Activated CD4-positive, alpha-beta T cell treated with anti-CD3 and anti-CD28 coated beads for 36 hours (primary cell): ENCODE measurements at regions of chr3 and their contacts with region 1.

Region 1: GRCh38 chr3:100400780-100401673 is at the starts of genes LNP1 and TOMM70:
- DNase-seq: peak; percentile 98
- ATAC-seq: peak; percentile 91
- H3K4me3 Mint-ChIP-seq: peak within 1 kb of the TSS; percentile 78
- H3K27ac Mint-ChIP-seq: peak within 1 kb of the TSS; percentile 96
- H3K4me1 Mint-ChIP-seq: peaks cover 51% of the 10 kb centered on the region
- H3K27me3 Mint-ChIP-seq: no peaks in the 10 kb centered on the region
- total RNA-seq, gene LNP1: 1.7 TPM
- total RNA-seq, gene TOMM70: 54.0 to 54.1 TPM

Region 2: GRCh38 chr3:99817437-99818240 is 583.4 kb before region 1 on chr3 and contains the start of gene CMSS1:
- CTCF ChIA-PET with region 1: no interaction called
- POLR2A ChIA-PET with region 1: no interaction called
- intact Hi-C with region 1: loop called (anchors 2 kb)
- DNase-seq: peak; percentile 98
- ATAC-seq: peak; percentile 92
- H3K4me3 Mint-ChIP-seq: peak within 1 kb of the TSS; percentile 85
- H3K27ac Mint-ChIP-seq: peak within 1 kb of the TSS; percentile 97
- H3K4me1 Mint-ChIP-seq: peaks cover 42% of the 10 kb centered on the region
- H3K27me3 Mint-ChIP-seq: no peaks in the 10 kb centered on the region
- total RNA-seq, gene CMSS1: 94.0 to 96.3 TPM

Region 3: DNA sequence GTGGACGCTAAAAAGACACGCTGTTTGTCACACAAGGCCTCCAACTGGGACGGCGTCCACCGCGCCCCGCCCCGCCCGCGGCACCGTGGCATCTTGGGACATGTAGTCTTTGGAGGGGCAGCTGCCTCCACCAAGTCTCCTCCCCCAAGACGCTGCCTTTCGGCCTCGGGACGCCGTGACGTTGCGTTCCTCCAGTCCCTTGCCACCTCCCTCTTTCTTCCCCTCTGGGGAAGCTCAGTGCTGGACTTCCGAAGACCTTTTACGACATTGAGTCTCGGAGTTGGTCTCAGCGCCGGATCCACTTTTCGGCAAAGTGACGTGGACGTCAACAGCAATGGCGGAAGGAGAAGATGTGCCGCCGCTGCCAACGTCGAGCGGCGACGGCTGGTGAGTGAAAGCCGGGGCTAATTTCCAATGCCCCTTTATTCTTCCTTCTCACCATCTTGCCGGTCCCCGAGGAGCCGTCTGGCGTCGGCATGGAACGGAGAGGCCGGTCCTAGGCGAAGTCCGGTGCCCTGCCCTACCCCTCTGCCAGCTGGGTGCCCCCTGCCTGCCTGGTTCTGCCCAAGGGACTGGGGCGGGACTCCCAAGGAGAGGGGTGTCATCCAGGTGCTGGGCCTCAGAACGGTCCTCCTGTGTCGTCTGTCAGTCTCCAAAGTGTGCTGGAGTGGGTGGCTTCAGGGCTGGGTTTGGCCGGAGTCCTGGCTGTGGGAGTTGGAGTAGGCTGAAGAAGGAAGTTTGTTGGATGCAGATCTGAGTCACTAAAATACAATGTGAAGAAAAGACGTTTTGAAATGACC is 140.1 kb before region 1 on chr3 and contains the start of gene TBC1D23:
- CTCF ChIA-PET with region 1: interaction called, 7 read pairs
- POLR2A ChIA-PET with region 1: interaction called, 6 read pairs
- intact Hi-C with region 1: loop called (anchors 1 kb)
- DNase-seq: peak; percentile 98
- ATAC-seq: peak; percentile 100
- H3K4me3 Mint-ChIP-seq: peak within 1 kb of the TSS; percentile 91
- H3K27ac Mint-ChIP-seq: peak within 1 kb of the TSS; percentile 96
- H3K4me1 Mint-ChIP-seq: peaks cover 58% of the 10 kb centered on the region
- H3K27me3 Mint-ChIP-seq: no peaks in the 10 kb centered on the region
- total RNA-seq, gene TBC1D23: 17.6 to 19.4 TPM

Region 4: DNA sequence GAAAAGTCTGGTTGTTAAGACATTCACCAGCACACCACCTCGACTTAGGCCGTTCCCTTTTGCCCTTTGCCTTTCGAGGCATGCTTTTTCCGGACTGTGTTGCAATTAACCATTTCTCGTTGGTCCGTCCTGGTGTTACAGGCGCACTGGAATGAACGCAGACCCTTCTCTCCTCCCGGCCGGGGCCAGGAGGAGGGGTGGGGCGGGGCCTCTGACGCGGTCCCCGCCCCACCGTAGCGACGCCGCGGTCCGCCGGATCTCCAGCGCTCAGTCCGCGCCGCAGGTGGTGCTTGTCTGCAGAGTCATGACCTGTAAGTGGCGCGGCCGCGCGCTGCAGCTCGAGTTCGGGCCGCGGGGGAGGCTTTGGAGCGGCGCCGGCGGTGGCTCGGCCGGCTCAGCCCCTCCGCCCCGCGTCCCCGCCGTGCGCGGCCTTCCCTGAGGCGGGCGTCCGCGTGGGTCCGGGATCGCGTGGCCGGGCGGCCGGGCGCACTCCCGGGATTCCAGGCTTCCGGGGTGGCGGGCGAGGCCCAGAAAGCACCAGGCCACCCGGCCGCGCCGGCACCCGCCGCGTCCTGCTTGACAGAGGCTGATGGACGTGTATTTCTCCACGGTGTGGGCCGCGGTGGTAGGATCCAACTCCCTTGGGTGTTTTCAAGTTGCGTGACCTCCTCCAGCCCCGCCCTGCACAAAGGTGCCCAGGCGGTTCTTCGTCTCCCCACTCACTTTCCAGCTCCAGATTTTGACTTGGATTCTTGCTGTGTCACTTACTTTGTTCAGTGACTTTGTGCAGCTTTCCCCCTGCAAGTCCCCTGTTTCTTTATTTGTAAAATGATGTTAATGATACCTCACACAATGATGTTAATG is 66.3 kb before region 1 on chr3 and contains the start of gene NIT2:
- CTCF ChIA-PET with region 1: interaction called, 5 read pairs
- POLR2A ChIA-PET with region 1: no interaction called
- intact Hi-C with region 1: loop called (anchors 1 kb)
- DNase-seq: peak; percentile 90
- ATAC-seq: peak; percentile 98
- H3K4me3 Mint-ChIP-seq: peak within 1 kb of the TSS; percentile 92
- H3K27ac Mint-ChIP-seq: peak within 1 kb of the TSS; percentile 96
- H3K4me1 Mint-ChIP-seq: peaks cover 24% of the 10 kb centered on the region
- H3K27me3 Mint-ChIP-seq: no peaks in the 10 kb centered on the region
- total RNA-seq, gene NIT2: 59.1 to 70.8 TPM

Region 5: GRCh38 chr3:100449214-100449613 is 48.2 kb after region 1 on chr3:
- CTCF ChIA-PET with region 1: no interaction called
- POLR2A ChIA-PET with region 1: no interaction called
- intact Hi-C with region 1: no loop called
- DNase-seq: no peak
- ATAC-seq: no peak
- H3K4me3 Mint-ChIP-seq: no peak overlapping the region
- H3K27ac Mint-ChIP-seq: no peak overlapping the region
- H3K4me1 Mint-ChIP-seq: no peaks in the 10 kb centered on the region
- H3K27me3 Mint-ChIP-seq: no peaks in the 10 kb centered on the region

Region 6: DNA sequence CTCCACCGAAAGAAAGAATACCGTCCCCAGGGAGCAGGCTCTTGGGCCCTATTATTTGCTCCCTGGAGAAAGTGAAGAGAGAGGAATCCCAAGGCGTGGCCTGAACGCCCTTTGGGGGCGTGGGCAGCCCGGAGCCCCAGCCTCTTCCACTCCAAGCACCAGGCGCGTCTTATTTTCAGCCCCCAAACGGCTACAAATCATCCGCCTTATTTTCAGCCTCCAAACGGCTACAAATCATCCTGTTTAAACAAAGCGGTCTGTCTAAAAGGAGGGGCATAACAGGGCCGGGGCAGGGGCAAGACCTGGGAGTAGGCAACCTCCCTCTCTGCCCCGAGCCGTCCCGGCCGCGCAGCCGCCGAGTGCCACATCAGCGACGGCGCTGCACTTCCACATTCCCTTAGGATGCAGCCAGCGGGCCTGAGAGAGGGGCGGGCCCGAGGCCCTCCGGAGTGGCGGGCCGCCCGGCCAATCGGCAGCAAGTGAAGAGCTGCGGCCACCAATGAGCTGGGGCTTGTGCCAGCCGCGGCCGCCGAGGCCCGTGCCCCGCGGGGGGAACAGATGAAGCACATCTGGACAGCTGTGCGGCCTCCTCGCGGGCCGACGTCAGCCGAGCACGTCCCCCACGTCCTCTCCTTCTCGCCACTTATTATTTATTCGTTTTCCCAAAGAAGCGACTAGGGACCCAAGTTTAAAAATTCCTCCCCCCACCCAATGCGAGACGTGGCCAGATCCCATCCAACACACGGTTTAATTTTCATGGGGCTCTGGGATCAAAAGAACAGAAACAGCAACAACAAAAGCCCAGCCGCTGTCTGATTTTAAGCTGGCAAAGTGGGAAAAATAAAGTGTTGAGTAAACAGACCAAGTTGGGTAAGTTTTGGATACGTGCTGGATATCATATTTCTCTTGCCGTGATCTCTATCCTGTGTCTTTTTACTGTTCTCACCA is 91.3 kb after region 1 on chr3 and contains the start of gene TMEM45A:
- CTCF ChIA-PET with region 1: no interaction called
- POLR2A ChIA-PET with region 1: no interaction called
- intact Hi-C with region 1: loop called in 1 of 2 experiments (anchors 1 kb)
- DNase-seq: peak; percentile 91
- ATAC-seq: peak; percentile 100
- H3K4me3 Mint-ChIP-seq: peak within 1 kb of the TSS; percentile 82
- H3K27ac Mint-ChIP-seq: peak within 1 kb of the TSS; percentile 77
- H3K4me1 Mint-ChIP-seq: peaks cover 6% of the 10 kb centered on the region
- H3K27me3 Mint-ChIP-seq: peaks cover 14% of the 10 kb centered on the region
- total RNA-seq, gene TMEM45A: 2.2 to 3.1 TPM

Region 7: DNA sequence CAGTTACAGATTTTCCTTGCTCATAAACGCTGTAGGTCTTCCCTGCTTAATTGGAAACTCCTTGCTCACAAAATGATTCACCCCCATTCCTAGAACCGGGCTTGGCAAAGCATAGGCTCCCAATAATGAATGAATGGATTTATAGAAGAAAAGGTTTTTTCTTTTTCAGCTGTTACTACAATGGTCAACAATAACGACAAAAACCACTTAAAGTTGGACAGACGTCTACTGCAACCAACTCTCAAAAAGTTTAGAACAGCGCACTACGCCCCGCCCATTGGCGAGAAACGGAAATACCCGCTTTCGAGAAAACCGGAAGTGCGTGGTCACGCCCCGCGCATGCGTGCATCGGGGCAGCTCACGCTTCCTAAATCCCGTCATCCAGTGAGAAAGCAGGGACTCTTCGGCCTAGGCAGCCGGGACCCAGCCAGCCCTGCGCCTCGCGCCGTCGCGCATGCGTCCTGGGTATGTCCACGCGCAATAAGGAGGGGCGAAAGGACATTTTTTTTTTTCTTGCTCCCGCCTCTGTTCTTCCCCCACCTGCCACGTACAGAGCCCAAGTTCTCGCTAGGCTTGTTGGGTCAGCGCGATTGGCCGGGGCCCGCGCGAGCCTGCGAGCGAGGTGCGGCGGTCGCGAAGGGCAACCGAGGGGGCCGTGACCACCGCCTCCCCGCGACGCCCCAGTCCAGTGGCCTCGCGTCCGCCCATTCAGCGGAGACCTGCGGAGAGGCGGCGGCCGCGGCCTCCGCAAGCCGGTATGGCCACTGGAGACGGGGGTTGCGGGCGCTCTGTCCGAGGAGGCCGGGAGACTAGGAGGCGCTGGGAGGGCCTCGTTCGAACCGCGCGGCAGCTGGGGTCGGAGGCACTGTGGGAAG is 308.2 kb after region 1 on chr3 and contains the start of gene TFG:
- CTCF ChIA-PET with region 1: interaction called, 3 read pairs
- POLR2A ChIA-PET with region 1: interaction called, 7 read pairs
- intact Hi-C with region 1: loop called (anchors 1 kb)
- DNase-seq: peak; percentile 98
- ATAC-seq: peak; percentile 91
- H3K4me3 Mint-ChIP-seq: peak within 1 kb of the TSS; percentile 79
- H3K27ac Mint-ChIP-seq: peak within 1 kb of the TSS; percentile 98
- H3K4me1 Mint-ChIP-seq: peaks cover 45% of the 10 kb centered on the region
- H3K27me3 Mint-ChIP-seq: no peaks in the 10 kb centered on the region
- total RNA-seq, gene TFG: 61.4 to 79.8 TPM

Region 8: GRCh38 chr3:101676765-101677435 is 1275.9 kb after region 1 on chr3 and contains the start of gene ZBTB11:
- CTCF ChIA-PET with region 1: no interaction called
- POLR2A ChIA-PET with region 1: no interaction called
- intact Hi-C with region 1: loop called (anchors 2 kb)
- DNase-seq: peak; percentile 100
- ATAC-seq: peak; percentile 78
- H3K4me3 Mint-ChIP-seq: peak within 1 kb of the TSS; percentile 94
- H3K27ac Mint-ChIP-seq: peak within 1 kb of the TSS; percentile 92
- H3K4me1 Mint-ChIP-seq: peaks cover 52% of the 10 kb centered on the region
- H3K27me3 Mint-ChIP-seq: no peaks in the 10 kb centered on the region
- total RNA-seq, gene ZBTB11: 25.1 to 26.0 TPM